IMR-90 (cell line): ENCODE measurements at regions of chr13 and their contacts with region 1.

Region 1: GRCh38 chr13:33409673-33410510 is 124.3 kb upstream of the STARD13 start:
- DNase-seq: no peak
- ATAC-seq: no peak; the same call in 1 of the 2 replicates
- H3K4me3 ChIP-seq: no peak overlapping the region
- H3K27ac ChIP-seq: no peak overlapping the region
- H3K4me1 ChIP-seq: peaks cover 5% of the 10 kb centered on the region; the same call in 1 of the 2 replicates
- H3K27me3 ChIP-seq: no peaks in the 10 kb centered on the region
- CTCF ChIP-seq: no peak
- POLR2A ChIP-seq: no peak
- RAD21 ChIP-seq: no peak

Region 2: DNA sequence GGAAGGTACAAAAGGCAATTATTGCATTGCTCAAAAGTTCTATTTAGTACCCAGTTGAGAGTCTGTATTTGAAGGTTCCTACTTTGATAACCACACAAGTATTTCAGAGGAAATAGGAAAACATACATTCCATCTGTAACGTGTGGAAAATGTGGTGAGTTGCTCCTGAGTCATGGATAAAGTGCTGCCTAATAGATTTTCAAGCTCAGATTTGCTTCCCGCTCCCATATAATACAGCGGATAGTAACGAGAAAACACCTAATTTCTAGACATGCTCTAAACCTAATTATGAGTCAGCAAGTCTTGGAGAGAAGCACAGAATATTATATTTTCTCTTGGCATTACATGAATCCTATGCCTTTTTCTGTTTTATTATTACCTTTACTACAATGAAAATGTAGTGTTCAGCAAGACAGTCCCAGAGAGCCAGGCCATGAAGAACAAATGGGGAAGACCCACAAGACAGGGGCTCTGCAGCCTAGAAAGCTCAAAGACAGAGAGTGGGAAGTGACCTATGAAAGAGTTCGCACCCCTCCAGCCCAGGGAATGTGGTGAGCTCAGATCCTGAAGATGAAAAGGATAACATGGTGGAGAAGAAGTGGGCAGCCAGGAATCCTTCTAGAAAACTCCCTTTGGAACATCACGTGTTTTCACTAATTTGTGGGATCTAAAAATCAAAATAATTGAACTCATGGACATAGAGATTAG is 240.5 kb before region 1 on chr13:
- CTCF ChIA-PET with region 1: no interaction called
- POLR2A ChIA-PET with region 1: no interaction called
- dilution Hi-C with region 1: no loop called
- in situ Hi-C with region 1: no loop called
- intact Hi-C with region 1: no loop called
- DNase-seq: peak; percentile 93
- ATAC-seq: peak; percentile 82
- H3K4me3 ChIP-seq: no peak overlapping the region
- H3K27ac ChIP-seq: peak overlapping the region; percentile 86
- H3K4me1 ChIP-seq: peaks cover 17% of the 10 kb centered on the region
- H3K27me3 ChIP-seq: no peaks in the 10 kb centered on the region
- CTCF ChIP-seq: no peak
- POLR2A ChIP-seq: no peak
- RAD21 ChIP-seq: 0 out of 2 replicates have a peak, but pooled peaks have one; percentile 14

Region 3: DNA sequence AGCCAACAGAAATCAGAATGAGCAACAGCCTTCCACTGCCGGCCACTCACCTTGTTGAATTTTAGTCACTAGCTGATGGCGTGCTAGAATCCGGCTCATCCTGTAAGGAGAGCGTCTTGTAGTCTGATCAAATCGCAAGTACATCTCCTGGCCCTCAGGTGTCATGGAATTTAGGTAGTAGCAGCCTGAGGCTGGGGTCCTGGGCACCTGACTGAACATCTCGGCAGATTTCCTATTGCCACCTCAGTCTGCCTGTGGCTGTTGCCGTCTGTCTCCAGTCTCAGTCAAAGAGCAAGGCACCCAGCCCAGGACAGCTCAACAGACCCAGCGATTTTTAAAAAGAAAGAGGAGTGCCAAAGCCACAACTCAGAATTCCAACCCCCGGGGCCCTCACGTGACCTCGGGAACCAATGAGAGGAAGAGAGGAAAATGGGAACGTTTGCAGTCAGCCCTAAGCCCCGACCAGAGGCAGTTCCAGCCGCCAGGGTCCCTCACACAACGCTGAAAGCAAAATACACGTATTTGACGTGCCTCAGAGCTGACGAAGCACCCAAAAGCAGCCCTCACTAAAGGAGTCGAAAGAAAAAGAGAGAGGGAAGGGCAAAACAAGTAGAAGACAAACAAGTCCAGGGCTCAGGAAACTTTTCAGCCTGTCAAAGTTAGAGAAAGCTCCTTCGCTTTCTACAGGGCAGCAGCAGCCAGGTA is 124.3 kb before region 1 on chr13 and contains the start of gene STARD13:
- CTCF ChIA-PET with region 1: no interaction called
- POLR2A ChIA-PET with region 1: no interaction called
- dilution Hi-C with region 1: no loop called
- in situ Hi-C with region 1: no loop called
- intact Hi-C with region 1: no loop called
- DNase-seq: peak; percentile 98
- ATAC-seq: peak; percentile 84
- H3K4me3 ChIP-seq: peak within 1 kb of the TSS; percentile 68
- H3K27ac ChIP-seq: peak within 1 kb of the TSS; percentile 97
- H3K4me1 ChIP-seq: peaks cover 17% of the 10 kb centered on the region
- H3K27me3 ChIP-seq: no peaks in the 10 kb centered on the region
- CTCF ChIP-seq: peak; percentile 64
- POLR2A ChIP-seq: peak; percentile 99
- RAD21 ChIP-seq: peak; percentile 60
- total RNA-seq, gene STARD13: 46.6 and 46.9 TPM in 2 replicates

Region 4: DNA sequence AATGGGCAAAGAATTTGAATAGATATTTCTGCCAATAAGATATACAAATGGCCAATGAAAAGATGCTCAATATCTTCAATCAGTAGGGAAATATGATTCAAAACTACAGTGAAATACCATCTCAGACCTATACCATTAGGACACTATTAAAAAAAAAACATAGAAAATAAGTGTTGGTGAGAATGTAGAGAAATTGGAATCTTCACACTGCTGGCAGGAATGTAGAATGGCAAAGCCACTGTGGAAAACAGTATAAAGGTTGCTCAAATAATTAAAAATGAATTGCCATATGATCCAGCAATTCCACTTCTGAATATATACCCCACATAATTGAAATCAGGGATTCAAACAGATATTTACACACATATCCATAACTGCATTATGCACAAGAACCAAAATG is 36.3 kb before region 1 on chr13:
- CTCF ChIA-PET with region 1: no interaction called
- POLR2A ChIA-PET with region 1: no interaction called
- dilution Hi-C with region 1: no loop called
- in situ Hi-C with region 1: no loop called
- intact Hi-C with region 1: loop called (anchors 1 kb)
- DNase-seq: no peak
- ATAC-seq: no peak
- H3K4me3 ChIP-seq: no peak overlapping the region
- H3K27ac ChIP-seq: no peak overlapping the region
- H3K4me1 ChIP-seq: no peaks in the 10 kb centered on the region
- H3K27me3 ChIP-seq: no peaks in the 10 kb centered on the region
- CTCF ChIP-seq: 0 out of 2 replicates have a peak, but pooled peaks have one; percentile 9
- POLR2A ChIP-seq: no peak
- RAD21 ChIP-seq: no peak

Region 5: GRCh38 chr13:33392794-33393371 is 17.0 kb before region 1 on chr13:
- CTCF ChIA-PET with region 1: no interaction called
- POLR2A ChIA-PET with region 1: no interaction called
- dilution Hi-C with region 1: no loop called
- in situ Hi-C with region 1: no loop called
- intact Hi-C with region 1: loop called (anchors 1 kb)
- DNase-seq: no peak
- ATAC-seq: no peak
- H3K4me3 ChIP-seq: no peak overlapping the region
- H3K27ac ChIP-seq: no peak overlapping the region
- H3K4me1 ChIP-seq: no peaks in the 10 kb centered on the region
- H3K27me3 ChIP-seq: no peaks in the 10 kb centered on the region
- CTCF ChIP-seq: no peak
- POLR2A ChIP-seq: no peak
- RAD21 ChIP-seq: no peak